Activated T-helper 2 cell treated with anti-CD3 and anti-CD28 coated beads, Interferon-gamma antibody, Interleukin-2, Interleukin-4, amounts not matched to agents 10 μg/mL and 5 μg/mL and 100 μg/mL, durations not matched to agents 14 hours and 24 hours and 36 hours (primary cell): ENCODE measurements at regions of chr4 and their contacts with region 1.

Region 1: GRCh38 chr4:142405021-142405694 is 440.9 kb downstream of the INPP4B start:
- DNase-seq: peak; percentile 64
- H3K4me3 Mint-ChIP-seq: peak overlapping the region; percentile 96
- H3K27ac Mint-ChIP-seq: peak overlapping the region; percentile 99
- H3K4me1 Mint-ChIP-seq: peaks cover 45% of the 10 kb centered on the region
- H3K27me3 Mint-ChIP-seq: no peaks in the 10 kb centered on the region

Region 2: DNA sequence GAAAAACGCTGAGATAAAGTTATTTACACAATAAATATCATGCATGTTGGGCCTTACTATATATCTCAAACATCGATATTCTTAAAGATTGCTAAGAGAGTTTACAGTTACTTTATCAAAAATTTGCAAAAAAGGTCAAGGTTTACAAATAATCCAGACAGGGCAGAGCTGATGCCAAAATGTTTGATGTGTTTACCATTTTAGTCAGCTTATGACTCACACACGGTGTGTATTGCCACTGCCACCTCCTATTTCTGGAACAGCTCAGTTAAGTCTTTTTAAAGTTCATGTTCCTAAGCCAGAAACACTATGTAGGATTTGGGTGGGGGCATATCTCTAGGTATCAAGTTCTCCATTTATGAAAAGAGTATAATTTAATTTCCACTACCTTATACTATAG is 139.6 kb before region 1 on chr4:
- intact Hi-C with region 1: loop called (anchors 5 kb)
- DNase-seq: no peak
- H3K4me3 Mint-ChIP-seq: no peak overlapping the region
- H3K27ac Mint-ChIP-seq: peak overlapping the region; percentile 69
- H3K4me1 Mint-ChIP-seq: peaks cover 70% of the 10 kb centered on the region
- H3K27me3 Mint-ChIP-seq: no peaks in the 10 kb centered on the region

Region 3: GRCh38 chr4:142360657-142361056 is 44.5 kb before region 1 on chr4:
- intact Hi-C with region 1: loop called (anchors 1 kb)
- DNase-seq: no peak
- H3K4me3 Mint-ChIP-seq: no peak overlapping the region
- H3K27ac Mint-ChIP-seq: peak overlapping the region; percentile 42
- H3K4me1 Mint-ChIP-seq: peaks cover 74% of the 10 kb centered on the region
- H3K27me3 Mint-ChIP-seq: no peaks in the 10 kb centered on the region

Region 4: DNA sequence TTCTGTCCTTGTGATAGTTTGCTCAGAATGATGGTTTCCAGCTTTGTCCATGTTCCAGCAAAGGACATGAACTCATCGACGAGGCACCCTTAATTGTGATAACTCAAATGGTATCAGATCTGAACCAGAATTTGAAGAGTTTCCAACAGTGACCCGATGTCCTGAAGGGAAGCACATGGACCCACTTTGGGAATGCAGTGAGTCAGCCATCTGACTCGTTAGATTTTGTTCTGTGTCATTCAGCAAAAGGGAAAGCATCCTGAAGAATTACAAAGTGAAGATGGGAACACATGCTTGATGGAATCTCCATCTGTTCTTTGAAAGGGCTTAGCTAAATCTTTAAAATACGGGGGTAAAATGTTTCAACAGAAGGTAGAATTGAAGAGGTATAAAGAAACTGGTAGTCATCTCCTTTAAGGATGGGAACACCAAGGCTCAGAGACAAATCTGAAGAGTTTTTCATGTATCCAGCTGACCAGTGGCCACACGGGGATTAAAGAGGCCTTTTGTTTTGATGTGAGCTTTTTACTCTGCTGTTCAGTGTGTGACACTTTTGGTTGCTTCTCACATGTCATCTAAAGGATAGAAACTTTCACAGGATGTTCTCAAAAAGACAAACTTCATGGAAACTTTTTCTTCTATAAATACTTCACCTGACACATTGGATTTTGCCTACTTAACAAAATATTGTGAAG is 47.1 kb after region 1 on chr4:
- intact Hi-C with region 1: no loop called
- DNase-seq: no peak
- H3K4me3 Mint-ChIP-seq: no peak overlapping the region
- H3K27ac Mint-ChIP-seq: no peak overlapping the region
- H3K4me1 Mint-ChIP-seq: peaks cover 13% of the 10 kb centered on the region
- H3K27me3 Mint-ChIP-seq: no peaks in the 10 kb centered on the region

Region 5: DNA sequence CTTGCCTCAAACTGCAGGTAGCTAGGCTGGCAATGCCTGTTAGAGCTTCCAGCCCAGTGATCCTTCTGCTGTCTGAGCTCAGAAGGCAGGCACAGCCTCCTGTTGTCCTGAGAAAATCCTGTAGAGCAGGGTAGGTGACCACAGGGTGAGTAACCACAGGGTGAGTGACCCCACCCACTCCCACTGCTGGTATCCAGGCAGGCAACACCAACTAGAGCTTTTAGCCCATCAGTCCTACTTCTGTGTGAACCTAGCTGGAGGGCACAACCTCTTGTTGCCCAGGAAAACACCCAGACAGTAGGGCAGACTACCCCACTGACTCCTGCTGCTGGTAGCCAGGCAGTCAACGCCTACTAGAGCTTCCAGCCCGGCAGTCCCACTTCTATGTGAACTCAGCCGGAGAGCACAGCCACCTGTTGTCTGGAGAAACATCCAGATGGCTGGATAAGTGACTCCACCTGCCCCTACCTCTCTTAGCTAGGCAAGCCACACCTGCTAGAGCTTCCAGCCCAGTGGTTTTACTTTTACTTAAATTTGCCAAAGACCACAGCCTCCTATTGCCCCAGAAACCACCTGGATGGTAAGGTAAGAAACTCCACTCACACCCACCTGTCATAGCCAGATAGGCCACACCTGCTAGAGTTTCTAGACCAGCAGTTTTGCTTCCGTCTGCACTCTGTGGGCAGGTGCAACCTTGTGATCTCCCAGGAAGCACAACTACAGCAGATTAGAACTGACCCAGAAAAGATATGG is 69.4 kb after region 1 on chr4:
- intact Hi-C with region 1: loop called (anchors 5 kb)
- DNase-seq: no peak
- H3K4me3 Mint-ChIP-seq: no peak overlapping the region
- H3K27ac Mint-ChIP-seq: no peak overlapping the region
- H3K4me1 Mint-ChIP-seq: peaks cover 23% of the 10 kb centered on the region
- H3K27me3 Mint-ChIP-seq: no peaks in the 10 kb centered on the region

Region 6: DNA sequence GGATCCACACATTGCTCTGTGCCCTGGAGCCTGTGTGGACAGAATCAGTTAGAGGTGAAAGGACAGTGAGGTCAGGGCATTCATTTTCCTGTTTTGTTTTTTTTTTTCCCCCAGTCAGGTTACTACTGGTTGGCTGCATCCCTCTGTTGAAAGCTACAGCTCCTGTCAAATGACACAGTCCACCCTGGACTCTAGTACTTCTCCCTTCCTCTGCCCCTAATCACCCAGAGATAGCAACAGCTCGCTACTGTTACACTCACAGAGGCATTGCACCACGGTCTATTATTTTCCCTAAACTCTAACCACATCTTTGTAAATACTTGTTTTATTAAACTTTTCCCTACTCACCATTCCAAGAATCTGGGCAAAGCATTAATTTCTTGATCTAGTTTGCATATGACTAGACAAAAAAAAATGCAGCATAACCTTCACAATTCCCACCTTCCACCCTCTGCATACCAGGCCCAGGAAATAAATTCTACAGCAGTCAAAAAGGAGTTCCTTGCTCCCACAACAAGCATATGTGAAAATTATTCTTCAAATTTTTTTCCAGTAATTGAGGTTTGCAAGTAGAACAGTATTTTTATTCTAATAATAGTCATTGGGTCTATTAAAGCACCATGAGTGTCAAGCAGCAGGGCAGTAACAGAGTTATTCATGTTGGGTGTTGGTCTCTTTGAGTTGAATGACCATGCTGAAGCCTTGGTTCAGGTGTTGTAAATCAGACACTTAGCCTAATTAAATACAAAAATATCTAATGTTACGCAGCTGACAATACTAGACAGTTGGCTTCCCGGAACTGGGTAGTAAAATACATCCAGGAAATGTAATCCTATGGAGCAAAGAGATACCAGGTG is 111.7 kb after region 1 on chr4:
- intact Hi-C with region 1: no loop called
- DNase-seq: no peak
- H3K4me3 Mint-ChIP-seq: no peak overlapping the region
- H3K27ac Mint-ChIP-seq: no peak overlapping the region
- H3K4me1 Mint-ChIP-seq: no peaks in the 10 kb centered on the region
- H3K27me3 Mint-ChIP-seq: no peaks in the 10 kb centered on the region

Region 7: GRCh38 chr4:142817442-142817841 is 412.3 kb after region 1 on chr4:
- intact Hi-C with region 1: loop called (anchors 2 kb)
- DNase-seq: peak; percentile 26
- H3K4me3 Mint-ChIP-seq: no peak overlapping the region
- H3K27ac Mint-ChIP-seq: peak overlapping the region; percentile 78
- H3K4me1 Mint-ChIP-seq: peaks cover 23% of the 10 kb centered on the region
- H3K27me3 Mint-ChIP-seq: no peaks in the 10 kb centered on the region